ENCODE measurements at regions of chr1 and their contacts with region 1.

Region 1: DNA sequence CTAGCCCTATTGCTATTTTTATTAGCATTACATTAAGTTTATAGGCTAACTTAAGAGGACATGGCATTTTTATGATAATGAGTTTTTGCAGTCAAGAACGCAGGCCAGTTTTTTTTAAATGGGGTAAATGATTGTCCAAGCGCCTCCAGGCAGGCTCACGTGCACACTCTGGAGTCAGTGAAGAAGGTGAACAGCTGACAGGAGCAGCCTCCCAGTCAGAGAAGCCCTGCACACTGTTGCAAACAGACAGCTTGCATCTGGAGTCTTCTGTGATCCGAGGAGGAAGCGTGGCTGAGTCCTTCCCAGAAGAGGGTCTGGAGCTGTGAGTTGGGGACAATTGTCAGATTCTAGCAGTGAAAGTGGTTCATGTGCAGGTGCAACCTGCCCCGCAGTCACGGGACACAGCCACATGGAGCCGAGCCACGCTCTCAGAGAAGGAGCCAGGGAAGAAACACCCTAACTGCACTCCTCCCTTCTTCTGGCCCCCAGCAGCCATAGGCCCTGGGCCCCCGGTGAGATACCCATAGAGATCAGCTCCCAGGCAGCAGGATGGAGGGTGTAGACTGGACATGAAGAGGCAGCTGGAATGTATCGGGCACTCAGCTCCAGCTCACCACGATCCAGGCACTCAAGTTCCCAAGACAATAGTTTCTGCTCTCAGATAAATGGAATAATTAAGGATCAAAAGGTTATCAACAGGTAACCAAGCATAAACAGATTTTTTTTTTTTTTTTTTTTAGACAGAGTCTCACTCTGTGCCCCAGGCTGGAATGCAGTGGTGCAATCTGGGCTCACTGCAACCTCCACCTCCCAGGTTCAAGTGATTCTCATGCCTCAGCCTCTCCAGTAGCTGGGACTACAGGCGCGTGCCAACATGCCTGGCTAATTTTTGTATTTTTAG is 26.4 kb downstream of the CAPN2 start:
- DNase-seq: peak; percentile 46 to 73
- H3K4me3 ChIP-seq: no peak overlapping the region
- H3K27ac ChIP-seq: peak overlapping the region; percentile 73
- H3K4me1 ChIP-seq: peaks cover 46% of the 10 kb centered on the region
- H3K27me3 ChIP-seq: no peaks in the 10 kb centered on the region
- CTCF ChIP-seq: no peak

Region 2: DNA sequence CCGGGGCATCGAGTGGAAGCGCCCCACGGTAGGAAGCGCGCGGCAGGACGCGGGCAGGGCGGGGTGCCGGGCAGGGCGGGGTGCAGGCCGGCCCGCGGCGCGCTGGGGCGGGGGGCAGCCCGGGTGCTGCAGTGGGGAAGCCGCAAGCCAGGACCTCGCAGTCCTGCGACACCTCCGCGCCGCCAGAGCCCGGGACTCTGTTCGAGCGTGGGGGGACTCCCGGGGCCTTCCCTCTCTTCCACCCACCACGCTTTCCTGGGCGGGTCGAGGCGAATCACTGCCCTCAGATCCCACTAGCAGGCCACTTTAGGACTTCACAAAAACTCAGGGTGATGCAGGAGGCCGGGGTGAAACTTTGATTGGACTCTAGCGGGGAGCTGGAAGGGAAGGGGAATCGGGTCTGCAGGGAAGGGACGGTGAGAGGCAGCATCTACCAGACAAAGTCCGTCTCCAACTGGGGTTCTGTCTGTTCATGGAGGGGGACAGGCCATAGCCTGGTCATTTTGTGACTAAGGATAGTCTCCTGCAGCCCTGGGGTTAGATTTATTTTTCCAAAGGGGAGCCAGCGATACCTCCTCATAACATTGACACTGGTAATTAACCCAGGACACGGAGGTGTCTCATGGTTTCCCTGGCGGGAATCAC is 25.7 kb before region 1 on chr1:
- CTCF ChIA-PET with region 1: no interaction called
- POLR2A ChIA-PET with region 1: interaction called, 6 read pairs
- intact Hi-C with region 1: loop called (anchors 1 kb)
- DNase-seq: peak in 1 of 2 experiments; percentile 32
- H3K4me3 ChIP-seq: peak overlapping the region; percentile 79
- H3K27ac ChIP-seq: peak overlapping the region; percentile 92
- H3K4me1 ChIP-seq: peaks cover 78% of the 10 kb centered on the region
- H3K27me3 ChIP-seq: no peaks in the 10 kb centered on the region
- CTCF ChIP-seq: no peak

Region 3: DNA sequence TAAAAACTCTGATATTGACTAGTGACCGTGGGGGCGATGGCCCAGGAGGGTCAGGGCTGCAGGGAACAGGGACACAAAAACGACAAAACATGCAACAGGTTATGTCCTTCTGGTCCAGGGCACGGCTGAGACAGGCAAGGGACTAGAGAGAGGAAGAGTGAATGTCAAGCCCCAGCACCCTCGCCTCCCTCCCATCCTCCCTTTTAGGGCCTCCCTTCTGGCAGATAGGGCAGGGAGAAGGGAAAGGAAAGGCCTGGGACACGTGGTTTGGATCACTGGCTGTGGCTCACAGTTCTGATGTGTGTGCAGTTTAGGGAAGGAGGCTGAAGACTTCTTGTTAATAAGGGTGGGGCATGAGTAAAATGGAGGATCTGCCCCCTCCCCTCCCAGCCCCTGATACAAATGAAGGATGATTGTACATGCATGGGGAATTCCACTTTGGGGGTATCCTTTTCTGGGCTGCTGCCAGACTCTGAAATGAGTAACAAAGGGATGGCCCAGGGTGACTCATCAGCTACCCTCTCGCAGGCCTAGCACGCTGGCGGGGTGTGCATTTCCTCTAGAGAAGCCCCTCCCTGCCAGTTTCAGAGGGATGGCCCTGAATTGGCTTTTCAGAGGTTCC is 12.2 kb before region 1 on chr1:
- CTCF ChIA-PET with region 1: interaction called, 13 read pairs
- POLR2A ChIA-PET with region 1: interaction called, 4 read pairs
- intact Hi-C with region 1: no loop called
- DNase-seq: peak; percentile 79 to 88
- H3K4me3 ChIP-seq: no peak overlapping the region
- H3K27ac ChIP-seq: peak overlapping the region; percentile 55
- H3K4me1 ChIP-seq: peaks cover 62% of the 10 kb centered on the region
- H3K27me3 ChIP-seq: no peaks in the 10 kb centered on the region
- CTCF ChIP-seq: no peak